K562 (cell line): ENCODE measurements at regions of chr1 and their contacts with region 1.

Region 1: GRCh38 chr1:91732291-91733107 is 153.5 kb downstream of the TGFBR3 start:
- DNase-seq: peak; percentile 85 to 98 (median 90)
- ATAC-seq: peak; percentile 94
- H3K4me3 ChIP-seq: no peak overlapping the region
- H3K27ac ChIP-seq: peak overlapping the region; percentile 95
- H3K4me1 ChIP-seq: peaks cover 31 to 77% of the 10 kb centered on the region in 2 experiments
- H3K27me3 ChIP-seq: no peaks in the 10 kb centered on the region
- CTCF ChIP-seq: 0 out of 6 replicates have a peak, but pooled peaks of 1 of the 3 experiments have one; percentile 2
- EP300 ChIP-seq: peak; percentile 98
- POLR2A ChIP-seq: peak; percentile 68
- RAD21 ChIP-seq: peak in 1 of 2 experiments; percentile 41; a peak in 1 of 4 replicates

Region 2: DNA sequence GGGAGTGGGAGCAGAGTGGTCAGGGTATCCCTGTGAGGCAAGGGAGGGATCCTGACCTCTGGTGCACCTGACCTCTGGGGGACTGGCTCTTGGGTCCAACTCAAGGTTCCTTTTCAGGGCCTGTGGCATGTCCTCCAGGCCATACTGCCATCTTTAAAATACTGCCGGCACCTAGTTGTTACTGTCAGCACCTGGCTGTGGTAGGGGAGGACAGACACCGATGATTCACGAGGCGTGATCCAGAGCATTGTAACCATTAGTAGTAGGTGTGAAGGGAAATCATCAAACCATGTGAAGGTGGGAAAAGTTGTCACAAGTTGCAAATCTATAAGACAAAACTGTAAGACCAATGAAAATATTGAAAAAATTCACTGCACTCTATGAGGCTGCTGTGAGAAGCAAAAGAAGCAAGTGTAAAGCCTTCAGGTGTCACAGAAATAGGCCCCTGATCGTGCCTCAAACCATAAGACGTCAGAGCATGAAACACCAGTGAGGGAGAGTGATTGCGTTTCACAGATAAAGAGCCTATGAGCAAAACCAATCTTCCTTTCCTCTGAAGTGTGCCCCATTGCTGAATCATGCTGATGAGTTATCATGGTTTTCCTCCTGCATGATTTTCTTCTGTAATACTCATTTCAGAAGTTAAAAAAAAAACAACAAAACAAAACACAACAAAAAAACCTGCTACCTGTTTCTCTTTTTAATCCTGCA is 176.5 kb before region 1 on chr1:
- CTCF ChIA-PET with region 1: no interaction called
- POLR2A ChIA-PET with region 1: no interaction called
- in situ Hi-C with region 1: no loop called
- intact Hi-C with region 1: loop called (anchors 10 kb)
- DNase-seq: peak; percentile 33 to 85 (median 62)
- ATAC-seq: peak; percentile 93
- H3K4me3 ChIP-seq: no peak overlapping the region
- H3K27ac ChIP-seq: peak overlapping the region; percentile 56; the same call in 2 of the 3 replicates
- H3K4me1 ChIP-seq: peaks cover 14 to 29% of the 10 kb centered on the region in 2 experiments
- H3K27me3 ChIP-seq: no peaks in the 10 kb centered on the region
- CTCF ChIP-seq: no peak
- EP300 ChIP-seq: peak; percentile 82
- POLR2A ChIP-seq: no peak
- RAD21 ChIP-seq: no peak; a peak in 1 of 4 replicates

Region 3: DNA sequence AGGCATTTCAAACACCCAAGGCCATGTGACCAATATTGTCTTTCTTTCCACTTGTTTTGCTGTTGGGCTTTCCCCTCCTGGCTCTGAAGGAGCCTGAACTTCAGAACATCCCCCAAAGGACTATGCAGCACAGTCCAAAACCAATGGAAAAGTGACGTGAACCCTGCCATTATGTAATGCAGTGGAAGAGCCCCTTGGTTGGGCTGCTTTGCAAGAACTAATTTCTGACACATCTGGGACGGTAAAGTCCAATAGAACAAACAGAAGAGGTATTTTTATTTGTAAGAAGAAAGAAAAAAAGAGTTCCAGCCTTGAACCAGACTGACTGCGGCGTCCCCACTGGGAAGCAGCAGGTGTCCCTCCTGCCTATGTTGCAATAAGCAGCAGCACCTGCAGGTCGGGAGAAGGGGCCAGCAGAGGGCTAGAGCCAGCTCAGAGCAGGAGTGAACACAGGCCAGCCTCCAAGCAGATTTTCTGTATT is 115.2 kb before region 1 on chr1:
- CTCF ChIA-PET with region 1: no interaction called
- POLR2A ChIA-PET with region 1: interaction called, 3 read pairs
- in situ Hi-C with region 1: no loop called
- intact Hi-C with region 1: loop called (anchors 10 kb)
- DNase-seq: peak in 3 of 4 experiments; percentile 38 to 63 (median 46)
- ATAC-seq: peak; percentile 97
- H3K4me3 ChIP-seq: no peak overlapping the region
- H3K27ac ChIP-seq: no peak overlapping the region
- H3K4me1 ChIP-seq: no peaks in the 10 kb centered on the region
- H3K27me3 ChIP-seq: no peaks in the 10 kb centered on the region
- CTCF ChIP-seq: peak; percentile 58 to 98 (median 86)
- EP300 ChIP-seq: no peak
- POLR2A ChIP-seq: no peak
- RAD21 ChIP-seq: peak; percentile 42 to 87

Region 4: GRCh38 chr1:91660708-91661107 is 71.8 kb before region 1 on chr1:
- CTCF ChIA-PET with region 1: no interaction called
- POLR2A ChIA-PET with region 1: no interaction called
- in situ Hi-C with region 1: no loop called
- intact Hi-C with region 1: no loop called
- DNase-seq: no peak
- ATAC-seq: no peak
- H3K4me3 ChIP-seq: no peak overlapping the region
- H3K27ac ChIP-seq: no peak overlapping the region
- H3K4me1 ChIP-seq: no peaks in the 10 kb centered on the region
- H3K27me3 ChIP-seq: no peaks in the 10 kb centered on the region
- CTCF ChIP-seq: no peak
- EP300 ChIP-seq: no peak
- POLR2A ChIP-seq: no peak
- RAD21 ChIP-seq: no peak

Region 5: GRCh38 chr1:91707114-91707889 is 25.2 kb before region 1 on chr1:
- CTCF ChIA-PET with region 1: no interaction called
- POLR2A ChIA-PET with region 1: interaction called, 5 read pairs
- in situ Hi-C with region 1: no loop called
- intact Hi-C with region 1: loop called (anchors 2 kb)
- DNase-seq: peak in 1 of 4 experiments; percentile 47
- ATAC-seq: peak; percentile 6
- H3K4me3 ChIP-seq: no peak overlapping the region
- H3K27ac ChIP-seq: peak overlapping the region; percentile 95
- H3K4me1 ChIP-seq: peaks cover 17 to 54% of the 10 kb centered on the region in 2 experiments; a peak in 4 of 5 replicates
- H3K27me3 ChIP-seq: no peaks in the 10 kb centered on the region
- CTCF ChIP-seq: no peak
- EP300 ChIP-seq: no peak
- POLR2A ChIP-seq: no peak
- RAD21 ChIP-seq: no peak

Region 6: DNA sequence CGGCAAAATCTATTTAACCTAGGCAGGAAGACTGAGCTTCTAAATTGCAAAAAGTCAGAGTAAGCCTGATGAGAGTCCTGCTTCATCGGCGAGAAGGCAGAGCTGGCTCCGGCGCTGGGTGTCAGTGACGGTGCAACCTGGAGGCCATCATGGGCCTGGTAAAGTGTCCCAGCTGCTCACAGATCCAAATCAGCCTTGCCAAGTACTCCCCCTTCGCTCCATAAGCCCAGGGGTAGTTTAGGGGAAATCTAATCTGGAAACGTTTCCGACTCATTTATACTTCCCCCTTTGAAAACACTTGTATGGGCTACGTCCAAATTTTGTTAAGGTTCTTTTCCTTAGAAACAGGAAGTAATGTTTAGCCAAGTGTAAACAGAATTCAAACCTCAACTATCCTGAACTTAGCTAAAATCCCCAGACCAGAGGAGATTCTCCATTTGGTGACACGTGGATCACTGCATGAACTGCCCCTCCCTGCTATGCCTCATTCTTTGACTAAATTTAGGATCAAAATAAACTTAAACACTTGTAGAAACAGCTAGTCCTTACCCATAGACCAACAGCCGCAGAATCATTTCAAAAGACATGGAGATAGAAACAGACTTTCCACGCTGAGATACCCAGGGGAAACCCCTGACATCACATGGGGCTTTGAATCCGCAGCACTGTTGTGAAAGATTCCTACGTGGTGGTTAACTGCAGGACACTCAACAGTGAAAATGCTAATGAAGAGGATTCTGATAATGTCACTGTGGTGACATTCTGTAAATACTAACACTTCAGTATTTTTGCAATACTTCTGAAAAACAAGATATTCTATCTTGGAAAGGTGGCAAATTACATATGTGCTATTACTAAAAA is 19.3 kb before region 1 on chr1:
- CTCF ChIA-PET with region 1: no interaction called
- POLR2A ChIA-PET with region 1: interaction called, 5 read pairs
- in situ Hi-C with region 1: no loop called
- intact Hi-C with region 1: loop called (anchors 1 kb)
- DNase-seq: peak in 1 of 4 experiments; percentile 63
- ATAC-seq: peak; percentile 67
- H3K4me3 ChIP-seq: no peak overlapping the region
- H3K27ac ChIP-seq: peak overlapping the region; percentile 81
- H3K4me1 ChIP-seq: peaks cover 7 to 68% of the 10 kb centered on the region in 2 experiments; a peak in 4 of 5 replicates
- H3K27me3 ChIP-seq: no peaks in the 10 kb centered on the region; a peak in 1 of 5 replicates
- CTCF ChIP-seq: no peak
- EP300 ChIP-seq: peak; percentile 30; the same call in 1 of the 2 replicates
- POLR2A ChIP-seq: 0 out of 2 replicates have a peak, but pooled peaks have one; percentile 26
- RAD21 ChIP-seq: no peak; a peak in 1 of 4 replicates

Region 7: GRCh38 chr1:91761295-91761721 is 28.8 kb after region 1 on chr1:
- CTCF ChIA-PET with region 1: no interaction called
- POLR2A ChIA-PET with region 1: no interaction called
- in situ Hi-C with region 1: no loop called
- intact Hi-C with region 1: loop called (anchors 1 kb)
- DNase-seq: peak in 2 of 4 experiments; percentile 32 to 51
- ATAC-seq: no peak; the same call in 2 of the 3 replicates
- H3K4me3 ChIP-seq: no peak overlapping the region
- H3K27ac ChIP-seq: no peak overlapping the region
- H3K4me1 ChIP-seq: peaks cover 9 to 62% of the 10 kb centered on the region in 2 experiments
- H3K27me3 ChIP-seq: no peaks in the 10 kb centered on the region
- CTCF ChIP-seq: no peak
- EP300 ChIP-seq: peak; percentile 32; the same call in 1 of the 2 replicates
- POLR2A ChIP-seq: no peak
- RAD21 ChIP-seq: no peak

Region 8: DNA sequence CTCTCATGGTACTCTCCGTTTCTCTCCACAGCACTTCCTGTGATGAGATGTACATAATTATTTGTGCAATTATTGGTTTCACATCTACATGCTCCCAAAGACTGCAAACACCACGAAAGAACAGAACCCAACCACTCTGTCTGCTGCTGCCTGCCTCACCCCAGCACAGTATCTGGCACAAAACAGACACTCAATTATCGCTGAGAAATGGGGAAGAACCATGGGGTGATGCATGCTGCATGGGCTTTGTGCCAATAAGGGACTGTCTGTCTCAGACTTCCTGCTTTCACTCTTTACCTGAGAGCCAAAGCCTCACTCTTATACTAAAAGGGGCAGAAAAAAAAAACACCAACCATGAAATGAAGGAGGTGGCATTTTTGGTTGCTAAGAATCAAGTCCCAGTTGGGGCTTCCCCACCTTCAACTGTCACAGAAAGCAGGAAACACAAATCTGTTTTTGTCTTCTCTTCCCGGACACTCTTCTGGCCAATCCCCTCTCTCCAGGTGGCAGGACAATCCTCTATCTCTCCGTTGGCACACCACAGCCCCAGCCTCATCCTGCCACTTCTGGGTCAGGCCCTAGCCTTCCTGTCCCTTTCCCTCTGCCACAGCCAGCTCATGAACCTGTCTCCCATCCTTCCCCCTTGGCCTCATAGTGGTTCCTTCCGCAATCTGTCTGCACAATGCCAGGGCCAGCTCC is 71.5 kb after region 1 on chr1:
- CTCF ChIA-PET with region 1: no interaction called
- POLR2A ChIA-PET with region 1: no interaction called
- in situ Hi-C with region 1: no loop called
- intact Hi-C with region 1: loop called (anchors 1 kb)
- DNase-seq: peak in 2 of 4 experiments; percentile 65 to 83
- ATAC-seq: peak; percentile 75
- H3K4me3 ChIP-seq: no peak overlapping the region
- H3K27ac ChIP-seq: peak overlapping the region; percentile 60
- H3K4me1 ChIP-seq: peaks cover 27 to 29% of the 10 kb centered on the region in 2 experiments
- H3K27me3 ChIP-seq: no peaks in the 10 kb centered on the region
- CTCF ChIP-seq: no peak
- EP300 ChIP-seq: peak; percentile 75; the same call in 1 of the 2 replicates
- POLR2A ChIP-seq: no peak
- RAD21 ChIP-seq: no peak